ENCODE measurements at regions of chr15 and their contacts with region 1.

Region 1: DNA sequence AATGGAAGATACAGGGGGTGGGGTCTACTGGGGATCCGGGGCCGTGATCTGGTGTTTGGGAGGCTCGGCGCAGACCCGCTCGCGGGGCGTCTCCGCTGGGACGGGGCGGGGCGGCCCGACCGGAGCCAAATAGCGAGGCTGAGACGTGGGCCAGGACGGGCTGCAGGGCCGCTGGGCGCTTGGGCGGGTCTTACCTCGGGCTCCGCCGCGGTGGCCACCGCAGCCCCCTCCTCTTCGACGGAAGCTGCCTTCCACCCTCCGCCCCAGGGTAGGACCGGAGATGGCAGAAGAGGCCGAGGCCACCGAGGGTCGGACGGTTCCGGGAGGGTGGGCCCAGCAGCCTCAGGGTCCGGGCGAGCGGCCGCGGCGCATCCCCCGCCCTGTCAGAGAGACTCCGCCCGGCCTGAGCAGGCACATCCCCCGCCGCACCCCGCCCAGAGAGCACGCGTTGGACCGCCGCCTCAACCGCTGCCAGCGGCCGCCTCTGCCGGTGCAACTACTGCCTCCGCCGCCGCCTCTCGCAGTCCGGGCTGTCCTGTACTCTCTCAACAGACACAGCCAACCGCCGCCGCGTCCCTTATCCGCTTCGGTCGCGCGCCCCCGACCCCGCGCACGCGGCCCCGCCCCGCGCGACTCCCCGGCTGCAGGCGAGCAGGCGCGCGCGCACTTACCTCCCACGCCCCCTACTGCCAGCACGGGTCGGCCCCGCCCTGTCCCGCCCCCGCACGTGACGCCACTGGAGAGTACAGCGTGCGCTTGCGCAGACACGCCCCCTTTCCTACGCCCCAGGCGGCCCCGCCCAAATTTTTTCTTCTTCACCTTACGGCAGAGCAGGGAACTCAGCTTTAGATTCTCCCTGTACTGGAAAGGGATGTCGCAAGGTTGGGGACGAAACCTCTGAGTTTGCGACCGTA is at the start of gene MYO9A:
- DNase-seq: peak; percentile 91 to 97 (median 96)
- H3K4me3 ChIP-seq: peak within 1 kb of the TSS; percentile 66 to 100 (median 94)
- H3K27ac ChIP-seq: peak within 1 kb of the TSS; percentile 77 to 98 (median 94)
- H3K27me3 ChIP-seq: no peaks in the 10 kb centered on the region
- CTCF ChIP-seq: peak in 43 of 56 donors; percentile 3 to 72 (median 35)
- total RNA-seq, gene MYO9A: 65.1 to 135 (median 98.1) TPM

Region 2: GRCh38 chr15:71888797-71889196 is 228.9 kb before region 1 on chr15:
- intact Hi-C with region 1: loop called in 1 of 2 experiments (anchors 5 kb)
- DNase-seq: no peak
- H3K4me3 ChIP-seq: no peak overlapping the region
- H3K27ac ChIP-seq: no peak overlapping the region
- H3K27me3 ChIP-seq: no peaks in the 10 kb centered on the region
- CTCF ChIP-seq: no peak

Region 3: DNA sequence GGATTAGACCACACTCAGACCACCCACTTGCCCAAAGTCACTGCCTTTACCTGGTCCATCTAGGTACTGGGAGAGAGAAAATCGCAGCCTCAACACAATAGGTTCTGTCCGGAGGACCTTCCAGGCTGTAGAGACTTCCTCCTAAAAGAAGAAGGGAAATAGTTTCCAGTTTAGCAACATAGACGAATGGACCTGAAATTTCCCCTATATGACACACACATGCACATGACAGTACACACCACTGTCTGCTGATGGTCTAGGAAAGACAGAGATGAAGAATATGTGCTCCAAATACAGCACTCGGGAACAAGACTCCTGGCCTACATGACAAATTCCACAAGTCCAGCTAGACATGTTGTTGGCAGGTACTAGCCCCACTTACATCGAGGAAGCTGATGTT is 147.3 kb after region 1 on chr15:
- intact Hi-C with region 1: no loop called
- DNase-seq: no peak
- H3K4me3 ChIP-seq: no peak overlapping the region
- H3K27ac ChIP-seq: no peak overlapping the region
- H3K27me3 ChIP-seq: no peaks in the 10 kb centered on the region
- CTCF ChIP-seq: no peak

Region 4: DNA sequence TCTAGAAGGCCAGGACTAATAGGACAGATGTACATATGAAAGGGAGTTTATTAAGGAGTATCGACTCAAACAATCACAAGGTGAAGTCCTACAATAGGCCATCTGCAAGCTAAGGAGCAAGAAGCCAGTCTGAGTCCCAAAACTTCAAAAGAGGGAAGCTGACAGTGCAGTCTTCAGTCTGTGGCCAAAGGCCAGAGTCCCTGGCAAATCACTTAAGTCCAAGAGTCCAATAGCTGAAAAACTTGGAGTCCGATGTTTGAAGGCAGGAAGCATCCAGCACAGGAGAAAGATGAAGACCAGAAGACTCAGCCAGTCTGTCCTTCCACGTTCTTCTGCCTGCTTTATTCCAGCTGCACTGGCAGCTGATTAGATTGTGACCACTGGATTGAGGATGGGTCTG is 213.3 kb after region 1 on chr15:
- intact Hi-C with region 1: no loop called
- DNase-seq: no peak
- H3K4me3 ChIP-seq: no peak overlapping the region
- H3K27ac ChIP-seq: no peak overlapping the region
- H3K27me3 ChIP-seq: no peaks in the 10 kb centered on the region
- CTCF ChIP-seq: no peak

Measured in dorsolateral prefrontal cortex (tissue), 120 donors.